ENCODE measurements at regions of chr3 and their contacts with region 1.

Region 1: DNA sequence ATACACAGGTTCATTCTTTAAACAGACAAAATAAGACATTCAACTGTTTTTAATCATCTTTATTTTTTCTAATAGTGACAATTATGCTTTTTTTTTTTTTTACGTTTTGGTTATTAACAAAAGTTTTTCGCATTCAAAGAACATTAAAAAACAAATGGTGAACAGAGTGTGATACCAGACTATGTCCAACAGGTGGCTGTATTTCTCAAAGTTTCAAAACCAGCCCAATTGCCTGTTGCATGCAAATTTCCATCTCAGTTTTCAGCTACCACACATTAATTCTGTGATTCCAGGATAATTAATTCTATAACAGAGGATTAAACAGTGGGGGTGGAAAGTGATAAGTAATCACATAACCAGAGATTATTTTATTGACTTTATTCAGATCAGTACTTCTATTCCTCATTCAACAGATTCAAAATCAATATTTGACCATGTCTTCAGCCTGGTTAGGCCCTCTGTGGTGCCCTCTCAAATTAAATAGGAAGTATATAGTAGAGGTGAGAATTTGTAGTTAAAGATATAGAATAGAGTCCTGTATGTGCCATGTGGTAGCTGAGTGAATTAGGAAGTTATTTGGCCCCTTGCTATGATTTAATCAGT is 122.2 kb upstream of the DCBLD2 start:
- DNase-seq: peak; percentile 73
- ATAC-seq: no peak; the same call in 1 of the 2 replicates
- H3K4me3 ChIP-seq: no peak overlapping the region
- H3K27ac ChIP-seq: no peak overlapping the region
- H3K4me1 ChIP-seq: no peaks in the 10 kb centered on the region
- H3K27me3 ChIP-seq: no peaks in the 10 kb centered on the region
- CTCF ChIP-seq: peak; percentile 91

Region 2: GRCh38 chr3:97863031-97863430 is 1160.7 kb before region 1 on chr3:
- CTCF ChIA-PET with region 1: no interaction called
- POLR2A ChIA-PET with region 1: no interaction called
- intact Hi-C with region 1: no loop called
- DNase-seq: peak; percentile 92
- ATAC-seq: peak; percentile 99
- H3K4me3 ChIP-seq: no peak overlapping the region
- H3K27ac ChIP-seq: peak overlapping the region; percentile 56
- H3K4me1 ChIP-seq: peaks cover 17% of the 10 kb centered on the region
- H3K27me3 ChIP-seq: no peaks in the 10 kb centered on the region
- CTCF ChIP-seq: no peak

Region 3: GRCh38 chr3:98722389-98722788 is 301.3 kb before region 1 on chr3:
- CTCF ChIA-PET with region 1: no interaction called
- POLR2A ChIA-PET with region 1: no interaction called
- intact Hi-C with region 1: no loop called
- DNase-seq: no peak
- ATAC-seq: no peak
- H3K4me3 ChIP-seq: no peak overlapping the region
- H3K27ac ChIP-seq: no peak overlapping the region
- H3K4me1 ChIP-seq: no peaks in the 10 kb centered on the region
- H3K27me3 ChIP-seq: no peaks in the 10 kb centered on the region
- CTCF ChIP-seq: no peak

Region 4: DNA sequence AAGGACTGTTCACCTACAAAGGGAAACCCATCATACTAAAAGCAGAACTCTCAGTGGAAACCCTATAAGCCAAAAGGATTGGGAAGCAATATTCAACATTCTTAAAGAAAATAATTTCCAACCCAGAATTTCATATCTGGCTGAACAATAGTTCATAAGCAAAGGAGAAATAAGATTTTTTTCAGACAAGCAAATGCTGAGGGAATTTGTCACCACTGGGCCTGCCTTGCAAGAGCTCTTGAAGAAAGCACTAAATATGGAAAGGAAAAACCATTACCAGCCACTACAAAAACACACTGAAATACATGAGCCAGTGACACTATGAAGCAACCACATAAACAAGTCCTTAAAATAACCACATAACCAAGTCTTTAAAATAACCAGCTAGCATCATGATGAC is 93.3 kb before region 1 on chr3:
- CTCF ChIA-PET with region 1: no interaction called
- POLR2A ChIA-PET with region 1: no interaction called
- intact Hi-C with region 1: no loop called
- DNase-seq: no peak
- ATAC-seq: no peak
- H3K4me3 ChIP-seq: no peak overlapping the region
- H3K27ac ChIP-seq: no peak overlapping the region
- H3K4me1 ChIP-seq: no peaks in the 10 kb centered on the region
- H3K27me3 ChIP-seq: no peaks in the 10 kb centered on the region
- CTCF ChIP-seq: no peak

Region 5: GRCh38 chr3:99084826-99085225 is 61.1 kb after region 1 on chr3:
- CTCF ChIA-PET with region 1: no interaction called
- POLR2A ChIA-PET with region 1: no interaction called
- intact Hi-C with region 1: loop called (anchors 2 kb)
- DNase-seq: peak; percentile 95
- ATAC-seq: peak; percentile 89
- H3K4me3 ChIP-seq: peak overlapping the region; percentile 53
- H3K27ac ChIP-seq: peak overlapping the region; percentile 92
- H3K4me1 ChIP-seq: peaks cover 49% of the 10 kb centered on the region
- H3K27me3 ChIP-seq: no peaks in the 10 kb centered on the region
- CTCF ChIP-seq: no peak

Region 6: DNA sequence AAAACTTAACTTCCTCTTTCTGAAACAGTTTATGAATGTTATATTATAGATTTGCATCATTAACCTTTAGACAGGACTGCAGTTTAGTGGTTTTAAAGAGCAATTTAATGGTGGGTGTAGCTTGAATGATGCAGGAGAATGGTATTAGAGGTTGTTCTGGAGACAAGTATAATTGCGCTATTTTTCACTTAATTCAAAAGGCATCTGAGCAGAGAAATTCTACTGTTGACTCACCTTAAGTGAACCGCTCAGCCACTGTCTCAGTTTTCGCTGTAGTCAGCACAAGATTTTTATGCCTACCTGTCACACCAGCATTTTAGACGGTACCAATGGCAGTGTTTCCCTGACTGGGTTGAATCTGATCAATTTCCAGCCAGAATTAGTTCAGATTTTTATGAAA is 226.6 kb after region 1 on chr3:
- CTCF ChIA-PET with region 1: no interaction called
- POLR2A ChIA-PET with region 1: no interaction called
- intact Hi-C with region 1: loop called (anchors 1 kb)
- DNase-seq: peak; percentile 75
- ATAC-seq: peak; percentile 68
- H3K4me3 ChIP-seq: no peak overlapping the region
- H3K27ac ChIP-seq: no peak overlapping the region
- H3K4me1 ChIP-seq: peaks cover 54% of the 10 kb centered on the region
- H3K27me3 ChIP-seq: no peaks in the 10 kb centered on the region
- CTCF ChIP-seq: no peak

Region 7: DNA sequence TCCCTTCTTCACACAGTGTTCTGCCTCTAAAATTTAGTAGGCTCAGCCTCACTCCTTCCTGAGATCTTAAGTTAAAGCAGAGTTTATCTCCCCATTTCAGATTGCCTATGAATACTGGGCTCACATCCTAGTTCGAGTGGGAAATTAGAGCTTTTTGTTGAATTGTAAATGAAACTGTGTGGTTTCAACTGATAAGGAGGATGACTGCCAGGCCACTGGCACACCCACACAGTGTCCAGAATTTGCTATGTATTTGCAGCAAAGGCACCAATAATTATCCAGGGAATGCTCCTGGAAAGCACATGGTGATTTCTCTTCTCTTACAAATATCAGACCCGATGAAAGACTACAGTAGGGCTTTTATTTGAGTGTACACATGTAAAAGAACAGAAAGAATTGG is 306.6 kb after region 1 on chr3:
- CTCF ChIA-PET with region 1: no interaction called
- POLR2A ChIA-PET with region 1: no interaction called
- intact Hi-C with region 1: loop called (anchors 10 kb)
- DNase-seq: peak; percentile 31
- ATAC-seq: peak; percentile 23
- H3K4me3 ChIP-seq: no peak overlapping the region
- H3K27ac ChIP-seq: no peak overlapping the region
- H3K4me1 ChIP-seq: peaks cover 22% of the 10 kb centered on the region
- H3K27me3 ChIP-seq: no peaks in the 10 kb centered on the region
- CTCF ChIP-seq: no peak

Region 8: DNA sequence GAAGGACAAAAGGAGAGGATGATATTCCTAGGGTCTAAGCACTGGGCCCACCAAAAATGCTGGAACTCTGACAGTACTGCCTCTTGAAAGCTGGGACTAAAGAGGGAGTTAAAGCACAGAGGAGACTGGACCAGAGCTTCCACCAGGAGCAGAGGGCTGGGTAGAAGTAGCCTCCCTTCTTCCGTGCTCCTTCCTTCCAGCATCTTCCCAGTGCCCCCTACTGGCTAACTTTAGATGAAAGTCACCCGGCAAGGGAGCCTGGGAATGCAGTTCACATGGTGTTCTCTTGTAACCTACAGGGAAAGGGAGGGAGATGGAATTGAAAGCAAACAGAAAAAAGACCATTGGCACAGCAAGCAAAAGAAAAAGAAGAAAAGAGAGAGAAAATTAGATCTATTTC is 508.6 kb after region 1 on chr3:
- CTCF ChIA-PET with region 1: interaction called, 3 read pairs
- POLR2A ChIA-PET with region 1: no interaction called
- intact Hi-C with region 1: loop called (anchors 2 kb)
- DNase-seq: peak; percentile 93
- ATAC-seq: peak; percentile 91
- H3K4me3 ChIP-seq: no peak overlapping the region
- H3K27ac ChIP-seq: no peak overlapping the region
- H3K4me1 ChIP-seq: peaks cover 11% of the 10 kb centered on the region
- H3K27me3 ChIP-seq: no peaks in the 10 kb centered on the region
- CTCF ChIP-seq: peak; percentile 95

Region 9: GRCh38 chr3:99747915-99748314 is 724.2 kb after region 1 on chr3:
- CTCF ChIA-PET with region 1: interaction called, 7 read pairs
- POLR2A ChIA-PET with region 1: no interaction called
- intact Hi-C with region 1: loop called (anchors 1 kb)
- DNase-seq: peak; percentile 81
- ATAC-seq: peak; percentile 94
- H3K4me3 ChIP-seq: no peak overlapping the region
- H3K27ac ChIP-seq: no peak overlapping the region
- H3K4me1 ChIP-seq: peaks cover 23% of the 10 kb centered on the region
- H3K27me3 ChIP-seq: no peaks in the 10 kb centered on the region
- CTCF ChIP-seq: peak; percentile 90

Measured in PC-3 (cell line).